Posterior vena cava (tissue), 2 donors: ENCODE measurements at regions of chr19 and their contacts with region 1.

Region 1: DNA sequence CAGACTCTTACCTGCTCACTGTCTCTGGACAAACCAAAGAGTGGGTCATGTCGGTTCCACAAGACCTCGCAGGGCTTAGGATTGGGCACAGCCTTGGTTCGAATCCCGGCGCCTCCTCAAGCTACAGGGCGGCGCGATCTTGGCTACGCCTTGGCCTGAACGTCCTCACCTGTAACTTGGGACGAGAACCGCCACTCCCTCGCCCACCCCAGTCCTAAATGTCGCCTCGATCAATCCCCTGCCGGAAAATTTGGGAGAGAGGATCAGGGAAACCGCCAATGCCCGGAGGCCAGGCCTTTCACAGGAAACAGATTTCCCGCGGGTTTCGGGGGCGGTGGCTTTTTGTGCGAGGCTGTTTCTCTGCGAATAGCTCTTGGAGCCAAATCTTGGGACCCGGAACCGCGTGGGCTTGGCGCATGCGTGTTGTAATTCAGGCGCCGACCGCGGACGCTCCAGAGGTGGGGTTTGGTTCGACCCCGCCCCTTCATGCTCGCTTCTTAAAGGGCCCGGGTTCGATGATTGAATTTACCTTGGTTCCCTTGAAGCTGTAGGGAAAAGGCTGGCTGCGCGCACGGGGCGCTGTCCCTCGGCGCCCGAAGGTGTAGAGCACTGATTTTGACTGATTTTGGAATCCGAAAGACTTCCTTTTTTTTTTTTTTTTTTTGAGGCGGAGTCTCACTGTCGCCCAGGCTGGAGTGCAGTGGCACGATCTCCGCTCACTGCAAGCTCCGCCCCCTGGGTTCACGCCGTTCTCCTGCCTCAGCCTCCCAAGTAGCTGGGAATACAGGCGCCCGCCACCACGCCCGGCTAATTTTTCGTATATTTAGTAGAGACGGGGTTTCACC is at the start of gene NR2C2AP:
- DNase-seq: peak; percentile 98
- total RNA-seq, gene NR2C2AP: 9.3 to 14.8 TPM

Region 2: GRCh38 chr19:19240476-19240875 is 37.2 kb after region 1 on chr19:
- intact Hi-C with region 1: loop called in 1 of 2 experiments (anchors 1 kb)
- DNase-seq: no peak